ENCODE measurements at regions of chr2 and their contacts with region 1.

Region 1: DNA sequence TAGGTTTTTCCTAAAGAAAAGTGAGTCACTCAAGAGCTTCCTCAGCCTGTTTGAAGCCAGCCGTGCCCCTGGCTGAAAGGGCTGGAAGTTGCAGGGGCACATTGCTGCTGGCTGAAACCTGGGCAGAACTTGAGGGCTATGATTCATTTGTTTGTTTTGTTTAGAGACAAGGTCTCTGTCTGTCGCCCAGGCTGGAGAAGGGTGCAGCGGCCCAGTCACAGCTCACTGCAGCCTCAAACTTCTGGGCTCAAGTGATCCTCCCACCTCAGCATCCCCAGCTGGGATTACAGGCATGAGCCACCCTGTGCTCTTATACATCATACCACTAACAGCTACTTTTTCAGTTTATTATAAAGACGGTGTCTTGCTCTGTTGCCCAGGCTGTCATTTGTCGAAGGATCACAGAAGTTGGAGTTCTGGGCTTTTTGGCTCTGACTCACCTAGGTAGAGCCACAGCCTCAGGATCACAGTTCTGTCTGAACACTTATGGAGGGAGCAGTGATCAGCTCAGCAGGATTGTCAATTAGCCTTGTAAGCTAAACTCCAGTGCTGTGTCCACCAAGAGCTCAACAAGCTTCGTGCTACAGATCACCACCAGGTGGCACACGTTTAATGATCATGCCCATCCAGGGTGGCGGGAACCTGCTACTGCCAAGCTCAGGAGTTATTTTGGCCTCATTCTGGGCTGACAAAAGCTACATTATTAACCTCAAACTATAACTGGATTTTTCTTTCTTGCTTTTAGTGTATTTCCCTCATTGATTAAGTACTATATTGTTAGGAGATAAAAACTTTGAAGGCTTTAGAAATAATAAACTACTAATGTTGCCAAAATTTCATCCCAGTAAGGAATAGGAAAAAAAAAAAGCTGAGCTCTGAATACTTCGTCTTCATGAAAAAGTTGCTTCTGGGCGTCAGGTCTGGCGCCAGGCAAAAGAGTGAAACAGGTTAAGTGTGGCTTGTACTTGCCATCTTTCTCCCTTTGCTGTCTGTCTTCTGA is 57.9 kb downstream of the ARHGEF33 start:
- DNase-seq: peak; percentile 75
- CTCF ChIP-seq: peak; percentile 75

Region 2: DNA sequence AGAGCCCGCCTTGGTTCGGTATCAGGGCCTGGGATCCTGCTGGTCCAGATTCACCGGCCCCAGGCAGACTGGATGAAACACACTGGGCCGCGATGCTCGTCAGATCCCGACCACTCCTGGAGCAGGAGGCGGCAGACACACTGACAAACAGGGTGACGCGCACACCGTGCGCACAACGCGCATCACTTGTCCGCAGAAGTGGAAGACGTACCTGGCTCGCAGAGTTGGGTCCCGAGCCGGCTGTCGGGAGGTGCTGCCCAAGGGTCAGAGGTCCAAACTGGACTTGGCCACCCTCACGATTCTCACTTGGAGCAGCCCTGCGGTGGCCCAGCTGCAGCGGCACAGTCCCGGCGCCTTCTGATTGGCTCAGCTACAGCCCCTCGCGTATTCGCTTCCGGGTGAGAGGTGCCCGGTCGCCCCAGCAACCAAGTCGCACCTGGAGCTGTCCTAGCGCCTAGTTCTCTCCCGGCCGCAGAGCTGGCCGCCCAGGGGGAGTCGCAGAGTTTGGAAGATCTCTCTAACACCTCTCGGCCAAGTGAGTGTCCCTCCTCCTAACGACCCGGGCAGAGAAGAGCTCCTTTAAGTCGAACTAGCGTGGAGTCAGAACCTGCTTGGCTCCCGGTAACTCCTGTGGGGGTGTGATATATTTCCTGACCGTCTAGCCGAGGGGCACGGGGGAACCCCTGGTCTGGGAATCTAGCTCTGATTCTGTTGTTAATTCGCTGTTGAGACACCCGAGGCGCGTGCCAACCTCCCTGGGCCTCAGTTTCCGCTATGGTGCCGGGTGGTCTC is 71.8 kb before region 1 on chr2 and contains the starts of genes DHX57 and MORN2:
- CTCF ChIA-PET with region 1: interaction called, 10 read pairs
- POLR2A ChIA-PET with region 1: no interaction called
- DNase-seq: peak; percentile 95
- CTCF ChIP-seq: no peak

Region 3: GRCh38 chr2:38935568-38936172 is 11.9 kb before region 1 on chr2:
- CTCF ChIA-PET with region 1: interaction called, 38 read pairs
- POLR2A ChIA-PET with region 1: no interaction called
- DNase-seq: no peak
- CTCF ChIP-seq: no peak

Region 4: DNA sequence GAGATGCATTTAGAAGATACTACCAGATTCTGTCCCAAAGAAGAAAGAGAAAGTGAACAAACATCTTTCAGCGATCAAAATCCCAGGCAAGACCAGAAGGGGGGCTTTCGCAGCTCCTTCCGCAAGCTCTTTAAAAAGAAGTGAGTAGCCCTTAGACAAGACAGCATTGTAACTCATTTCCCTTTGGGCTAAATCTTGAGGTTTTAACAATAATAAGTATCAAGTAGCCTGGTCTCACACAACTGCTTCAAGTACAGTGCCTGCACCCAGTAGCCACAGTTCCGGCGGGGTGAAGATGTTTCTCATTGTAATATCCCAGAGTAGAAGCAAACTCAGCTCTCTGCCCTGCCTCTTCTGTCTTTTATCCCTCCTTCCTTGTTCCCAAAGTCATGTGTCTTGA is 18.5 kb after region 1 on chr2:
- CTCF ChIA-PET with region 1: interaction called, 14 read pairs
- POLR2A ChIA-PET with region 1: no interaction called
- DNase-seq: no peak
- CTCF ChIP-seq: no peak

Region 5: GRCh38 chr2:39059366-39059952 is 111.9 kb after region 1 on chr2:
- CTCF ChIA-PET with region 1: interaction called, 18 read pairs
- POLR2A ChIA-PET with region 1: no interaction called
- DNase-seq: peak; percentile 39
- CTCF ChIP-seq: peak; percentile 62

Region 6: GRCh38 chr2:39141331-39142271 is 194.1 kb after region 1 on chr2:
- CTCF ChIA-PET with region 1: no interaction called
- POLR2A ChIA-PET with region 1: no interaction called
- DNase-seq: no peak
- CTCF ChIP-seq: no peak